ENCODE measurements at regions of chr1 and their contacts with region 1.

Region 1: DNA sequence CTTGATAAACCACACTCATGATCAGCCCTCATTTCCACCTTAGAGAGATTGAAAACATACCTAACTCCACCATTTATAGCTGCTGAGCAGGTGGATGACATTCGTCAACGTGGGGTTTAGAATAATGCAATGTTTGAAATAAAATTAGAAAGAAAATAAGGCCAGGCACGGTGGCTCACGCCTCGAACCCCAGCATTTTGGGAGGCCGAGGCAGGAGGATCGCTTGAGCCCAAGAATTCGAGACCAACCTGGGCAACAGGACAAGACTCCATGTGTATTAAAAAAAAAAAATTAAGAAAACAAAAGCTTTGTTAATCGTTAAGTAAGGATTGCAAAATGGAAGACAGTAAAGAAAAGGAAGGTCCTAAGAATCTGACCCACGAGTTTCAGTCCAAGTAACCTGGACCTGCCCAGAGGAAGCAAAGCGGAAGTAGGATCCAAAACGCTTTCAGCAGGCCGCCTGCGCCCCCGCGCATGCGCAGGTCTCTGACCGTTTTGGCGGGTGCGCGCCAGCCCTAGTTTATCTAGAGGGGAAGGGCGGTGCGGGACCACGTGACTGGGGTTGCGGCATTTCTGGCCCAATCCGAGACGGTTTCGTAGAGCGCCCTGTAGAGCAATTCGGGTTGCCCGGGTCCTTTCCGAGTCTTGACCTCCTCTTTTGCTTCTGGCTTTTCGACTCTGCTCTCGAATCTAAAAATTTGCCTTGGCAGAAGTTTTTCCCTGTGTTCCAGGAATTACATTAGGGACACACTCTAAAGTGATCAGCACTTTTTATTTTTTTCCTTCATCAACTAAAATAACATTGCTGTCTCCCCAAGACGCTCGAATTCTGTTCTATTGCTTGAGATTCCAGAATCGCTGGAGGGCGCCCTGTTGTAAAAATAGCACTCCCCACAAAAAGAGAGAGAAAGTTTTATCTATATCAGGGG is 22.5 kb downstream of the ANP32E start:
- DNase-seq: peak; percentile 72 to 92 (median 88)
- ATAC-seq: peak; percentile 100
- H3K4me3 ChIP-seq: peak overlapping the region; percentile 59
- H3K4me3 Mint-ChIP-seq: peak overlapping the region; percentile 75 to 95 (median 92)
- H3K27ac ChIP-seq: peak overlapping the region; percentile 69
- H3K27ac Mint-ChIP-seq: peak overlapping the region; percentile 84 to 98 (median 97)
- H3K4me1 ChIP-seq: peaks cover 6% of the 10 kb centered on the region in 2 donors
- H3K4me1 Mint-ChIP-seq: peaks cover 5 to 19% (median 18%) of the 10 kb centered on the region in 7 donors
- H3K27me3 ChIP-seq: no peaks in the 10 kb centered on the region
- H3K27me3 Mint-ChIP-seq: peaks cover 0 to 11% (median 0%) of the 10 kb centered on the region in 5 donors

Region 2: GRCh38 chr1:150061632-150062101 is 151.8 kb before region 1 on chr1:
- CTCF ChIA-PET with region 1: no interaction called
- POLR2A ChIA-PET with region 1: no interaction called
- intact Hi-C with region 1: no loop called
- DNase-seq: no peak
- ATAC-seq: no peak
- H3K4me3 ChIP-seq: no peak overlapping the region
- H3K4me3 Mint-ChIP-seq: no peak overlapping the region
- H3K27ac ChIP-seq: no peak overlapping the region
- H3K27ac Mint-ChIP-seq: no peak overlapping the region
- H3K4me1 ChIP-seq: no peaks in the 10 kb centered on the region
- H3K4me1 Mint-ChIP-seq: peaks cover 2 to 11% (median 8%) of the 10 kb centered on the region in 7 donors
- H3K27me3 ChIP-seq: no peaks in the 10 kb centered on the region
- H3K27me3 Mint-ChIP-seq: peaks cover 0 to 20% (median 0%) of the 10 kb centered on the region in 5 donors

Region 3: GRCh38 chr1:150149271-150150132 is 63.9 kb before region 1 on chr1 and contains the start of gene PLEKHO1:
- CTCF ChIA-PET with region 1: no interaction called
- POLR2A ChIA-PET with region 1: interaction called, 4 read pairs
- intact Hi-C with region 1: loop called in 1 of 2 experiments (anchors 2 kb)
- DNase-seq: peak; percentile 53 to 84 (median 65)
- ATAC-seq: peak; percentile 86
- H3K4me3 ChIP-seq: peak within 1 kb of the TSS; percentile 89
- H3K4me3 Mint-ChIP-seq: peak within 1 kb of the TSS; percentile 89 to 99 (median 96)
- H3K27ac ChIP-seq: peak within 1 kb of the TSS; percentile 77
- H3K27ac Mint-ChIP-seq: peak within 1 kb of the TSS; percentile 87 to 99 (median 97)
- H3K4me1 ChIP-seq: peaks cover 21 to 38% of the 10 kb centered on the region in 2 donors
- H3K4me1 Mint-ChIP-seq: peaks cover 42 to 79% (median 74%) of the 10 kb centered on the region in 7 donors
- H3K27me3 ChIP-seq: no peaks in the 10 kb centered on the region
- H3K27me3 Mint-ChIP-seq: peaks cover 0 to 26% (median 0%) of the 10 kb centered on the region in 5 donors
- total RNA-seq, gene PLEKHO1: 64.9 to 111 (median 94.1) TPM

Region 4: DNA sequence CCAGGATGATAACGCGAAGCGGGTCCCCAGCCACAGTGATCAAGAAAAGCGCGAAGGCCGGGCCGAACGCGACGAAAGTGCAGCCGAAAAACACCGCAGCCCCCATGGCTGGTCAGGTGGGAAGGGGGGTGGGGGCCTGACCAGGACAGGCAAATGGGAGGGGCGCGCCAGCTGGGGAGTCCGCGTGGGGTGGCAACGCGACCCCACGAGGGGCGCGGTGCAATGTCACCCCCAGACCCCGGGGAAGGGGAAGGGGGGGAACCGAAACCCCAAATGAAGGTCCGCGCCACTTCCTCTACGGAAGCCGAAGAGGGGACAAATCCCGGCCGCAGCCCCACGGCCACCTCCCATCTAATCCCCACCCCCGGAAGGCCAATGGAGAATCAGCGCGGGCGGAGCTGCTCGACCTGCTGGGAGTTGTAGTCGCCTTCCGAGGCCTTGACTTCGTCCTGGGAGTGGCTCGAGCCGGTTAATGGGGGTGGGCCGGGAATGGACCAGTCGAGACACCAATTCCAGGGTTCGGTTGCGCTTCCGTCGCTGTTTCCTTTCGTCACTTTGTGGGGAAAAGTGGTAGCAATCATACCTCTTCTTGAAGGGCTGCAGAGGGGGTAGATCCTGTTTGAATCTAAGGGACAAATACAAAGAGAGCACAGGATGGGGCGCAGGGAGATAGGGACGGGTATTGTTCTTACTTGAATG is 55.4 kb after region 1 on chr1 and contains the start of gene APH1A:
- CTCF ChIA-PET with region 1: no interaction called
- POLR2A ChIA-PET with region 1: interaction called, 5 read pairs
- intact Hi-C with region 1: loop called in 1 of 2 experiments (anchors 1 kb)
- DNase-seq: peak; percentile 69 to 92 (median 89)
- ATAC-seq: peak; percentile 97
- H3K4me3 ChIP-seq: peak within 1 kb of the TSS; percentile 87
- H3K4me3 Mint-ChIP-seq: peak within 1 kb of the TSS; percentile 94 to 99 (median 96)
- H3K27ac ChIP-seq: peak within 1 kb of the TSS; percentile 97
- H3K27ac Mint-ChIP-seq: peak within 1 kb of the TSS; percentile 88 to 99 (median 94)
- H3K4me1 ChIP-seq: peaks cover 13 to 20% of the 10 kb centered on the region in 2 donors
- H3K4me1 Mint-ChIP-seq: peaks cover 25 to 39% (median 30%) of the 10 kb centered on the region in 7 donors
- H3K27me3 ChIP-seq: no peaks in the 10 kb centered on the region
- H3K27me3 Mint-ChIP-seq: no peaks in the 10 kb centered on the region
- total RNA-seq, gene APH1A: 112 to 143 (median 127) TPM

Region 5: DNA sequence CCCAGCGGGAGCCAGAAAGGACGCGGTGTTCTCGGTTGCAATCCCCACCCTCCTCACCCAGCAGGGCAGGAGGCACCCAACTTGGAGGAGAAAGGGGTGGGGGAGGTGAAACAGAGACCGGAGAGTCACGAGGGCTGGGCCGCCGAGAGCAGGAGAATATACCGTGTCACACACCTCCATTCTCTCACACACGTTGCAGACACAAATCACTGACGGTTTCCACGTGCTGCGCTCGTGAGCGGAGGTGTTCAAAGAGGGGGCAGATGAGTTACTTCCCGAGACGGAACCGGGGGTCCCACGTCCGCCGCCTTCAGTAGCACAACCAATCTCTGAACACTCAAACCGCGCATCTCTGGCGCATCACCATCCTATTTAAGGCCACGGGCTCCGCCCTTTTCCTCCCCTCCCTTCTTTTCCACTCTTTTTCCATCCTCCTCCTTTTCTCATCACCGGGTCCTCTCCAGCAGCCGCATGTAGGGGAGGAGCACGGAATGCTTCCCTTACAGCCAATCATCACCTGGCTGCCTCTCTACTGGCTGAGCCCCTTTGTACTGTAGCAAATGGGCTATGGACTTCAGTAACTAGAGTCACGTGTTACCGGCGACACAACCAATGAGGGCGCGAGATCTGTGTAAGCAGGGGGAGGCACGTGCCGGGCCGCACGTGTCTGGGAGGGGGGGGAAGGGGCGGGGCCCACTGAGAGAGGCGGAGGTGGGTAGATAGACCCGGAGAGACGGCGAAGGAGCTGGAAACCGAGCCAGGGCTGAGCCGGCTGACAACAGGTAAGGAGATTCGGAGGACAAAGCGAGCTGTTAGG is 68.6 kb after region 1 on chr1 and contains the start of gene CIART:
- CTCF ChIA-PET with region 1: no interaction called
- POLR2A ChIA-PET with region 1: no interaction called
- intact Hi-C with region 1: loop called in 1 of 2 experiments (anchors 1 kb)
- DNase-seq: peak; percentile 34 to 88 (median 82)
- ATAC-seq: peak; percentile 95
- H3K4me3 ChIP-seq: peak within 1 kb of the TSS; percentile 58
- H3K4me3 Mint-ChIP-seq: peak within 1 kb of the TSS; percentile 84 to 98 (median 94)
- H3K27ac ChIP-seq: peak within 1 kb of the TSS; percentile 52
- H3K27ac Mint-ChIP-seq: peak within 1 kb of the TSS; percentile 80 to 98 (median 91)
- H3K4me1 ChIP-seq: peaks cover 11 to 23% of the 10 kb centered on the region in 2 donors
- H3K4me1 Mint-ChIP-seq: peaks cover 20 to 36% (median 32%) of the 10 kb centered on the region in 7 donors
- H3K27me3 ChIP-seq: no peaks in the 10 kb centered on the region
- H3K27me3 Mint-ChIP-seq: peaks cover 0 to 13% (median 0%) of the 10 kb centered on the region in 5 donors
- total RNA-seq, gene CIART: 1.4 to 2.6 (median 2.4) TPM